Aorta (tissue), 5 donors: ENCODE measurements at regions of chr1 and their contacts with region 1.

Region 1: GRCh38 chr1:33560680-33561079 is 88.2 kb downstream of the ZSCAN20 start:
- DNase-seq: no peak
- ATAC-seq: no peak
- H3K4me3 ChIP-seq: no peak overlapping the region
- H3K27ac ChIP-seq: no peak overlapping the region
- H3K4me1 ChIP-seq: peaks cover 0 to 2% of the 10 kb centered on the region in 2 donors
- H3K27me3 ChIP-seq: no peaks in the 10 kb centered on the region

Region 2: GRCh38 chr1:33599516-33600115 is 38.9 kb after region 1 on chr1:
- intact Hi-C with region 1: loop called in 1 of 2 experiments (anchors 5 kb)
- DNase-seq: no peak
- ATAC-seq: no peak
- H3K4me3 ChIP-seq: no peak overlapping the region
- H3K27ac ChIP-seq: no peak overlapping the region
- H3K4me1 ChIP-seq: no peaks in the 10 kb centered on the region
- H3K27me3 ChIP-seq: no peaks in the 10 kb centered on the region